ENCODE measurements at regions of chr1 and their contacts with region 1.

Region 1: GRCh38 chr1:110668549-110668948 is 6.2 kb downstream of the KCNA3 start:
- DNase-seq: peak in 4 of 9 experiments; percentile 9 to 75 (median 34)
- ATAC-seq: peak; percentile 18
- H3K4me3 ChIP-seq: peak overlapping the region; percentile 25 to 97
- H3K4me3 Mint-ChIP-seq: peak overlapping the region; percentile 78
- H3K27ac ChIP-seq: peak overlapping the region; percentile 41 to 95
- H3K27ac Mint-ChIP-seq: peak overlapping the region; percentile 93
- H3K4me1 ChIP-seq: peaks cover 47% of the 10 kb centered on the region
- H3K4me1 Mint-ChIP-seq: peaks cover 34% of the 10 kb centered on the region
- H3K27me3 ChIP-seq: no peaks in the 10 kb centered on the region
- H3K27me3 Mint-ChIP-seq: no peaks in the 10 kb centered on the region
- CTCF ChIP-seq: no peak

Region 2: DNA sequence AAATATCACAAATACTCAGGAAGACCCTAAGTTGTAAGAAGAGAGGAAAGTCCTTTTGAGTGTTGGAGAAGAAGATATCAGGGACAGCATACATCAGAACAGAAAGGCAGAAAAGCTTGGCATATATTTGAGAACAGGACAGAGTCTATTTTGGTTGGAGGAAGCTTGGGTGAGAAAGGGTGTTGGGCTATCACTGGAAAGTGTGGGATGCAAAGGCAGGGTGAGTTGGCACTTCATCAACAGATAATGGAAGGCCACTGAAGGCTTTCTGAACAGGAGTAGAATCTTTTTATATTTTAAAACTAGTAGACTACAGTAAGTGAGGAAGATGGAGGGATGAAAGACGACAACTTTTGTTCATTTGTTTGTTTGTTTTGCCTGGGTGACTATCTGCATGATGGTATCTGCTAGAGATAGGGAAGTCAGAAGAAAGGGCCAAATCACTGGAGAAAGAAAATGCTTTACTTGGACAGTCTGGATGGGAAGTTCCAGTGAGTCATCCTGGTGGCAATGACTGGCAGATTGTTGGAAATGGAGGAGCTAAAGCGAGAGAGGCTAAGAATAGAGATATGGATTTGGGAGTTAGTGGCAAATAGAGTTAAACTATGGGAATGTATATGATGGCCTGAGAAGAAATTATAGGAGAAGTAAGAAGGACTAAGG is 28.7 kb before region 1 on chr1:
- CTCF ChIA-PET with region 1: interaction called, 16 read pairs
- POLR2A ChIA-PET with region 1: interaction called, 50 read pairs
- intact Hi-C with region 1: no loop called
- DNase-seq: no peak
- ATAC-seq: no peak
- H3K4me3 ChIP-seq: no peak overlapping the region
- H3K4me3 Mint-ChIP-seq: no peak overlapping the region
- H3K27ac ChIP-seq: peak overlapping the region in 1 of 2 experiments; percentile 59
- H3K27ac Mint-ChIP-seq: peak overlapping the region; percentile 83
- H3K4me1 ChIP-seq: peaks cover 90% of the 10 kb centered on the region
- H3K4me1 Mint-ChIP-seq: peaks cover 91% of the 10 kb centered on the region
- H3K27me3 ChIP-seq: no peaks in the 10 kb centered on the region
- H3K27me3 Mint-ChIP-seq: no peaks in the 10 kb centered on the region
- CTCF ChIP-seq: no peak

Region 3: DNA sequence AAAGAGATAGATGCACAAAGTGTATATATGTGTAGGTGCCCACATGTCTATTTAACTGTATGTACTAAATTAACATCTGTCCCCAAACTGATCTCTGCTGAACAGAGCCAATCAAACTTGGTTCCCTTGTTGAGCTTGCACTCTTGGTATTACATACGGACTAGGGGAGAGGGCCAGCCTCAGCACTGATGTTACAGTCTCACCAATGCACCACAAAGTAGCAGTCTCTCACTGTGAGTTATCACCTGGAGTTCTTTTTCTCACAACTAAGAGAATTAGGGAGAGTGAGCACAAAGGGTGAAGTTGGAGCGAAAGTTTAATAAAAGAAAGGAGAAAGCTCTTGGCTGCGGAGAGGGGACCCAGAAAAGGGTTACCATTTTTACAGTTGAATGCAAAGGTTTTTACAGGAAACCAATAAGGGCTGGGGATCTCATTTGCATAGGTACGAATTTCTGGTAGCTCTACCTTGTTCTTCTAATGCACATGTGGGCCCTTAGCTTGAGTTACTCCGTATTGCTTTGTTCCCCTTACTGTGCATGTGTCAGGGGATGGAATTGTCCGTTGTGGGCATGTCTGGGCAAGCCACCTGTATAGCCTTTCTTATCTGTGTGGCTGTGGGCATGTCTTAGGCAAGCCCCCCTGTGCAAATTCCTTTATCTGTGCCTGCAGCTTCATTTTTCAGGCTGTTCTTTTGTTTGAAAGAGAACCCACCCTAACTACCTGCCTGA is 545.7 kb after region 1 on chr1:
- CTCF ChIA-PET with region 1: no interaction called
- POLR2A ChIA-PET with region 1: no interaction called
- intact Hi-C with region 1: loop called in 1 of 2 experiments (anchors 1 kb)
- DNase-seq: no peak
- ATAC-seq: no peak
- H3K4me3 ChIP-seq: peak overlapping the region in 1 of 2 experiments; percentile 26
- H3K4me3 Mint-ChIP-seq: peak overlapping the region; percentile 72
- H3K27ac ChIP-seq: peak overlapping the region; percentile 65 to 84
- H3K27ac Mint-ChIP-seq: peak overlapping the region; percentile 94
- H3K4me1 ChIP-seq: peaks cover 65% of the 10 kb centered on the region
- H3K4me1 Mint-ChIP-seq: peaks cover 90% of the 10 kb centered on the region
- H3K27me3 ChIP-seq: no peaks in the 10 kb centered on the region
- H3K27me3 Mint-ChIP-seq: no peaks in the 10 kb centered on the region
- CTCF ChIP-seq: no peak